ENCODE measurements at regions of chr12 and their contacts with region 1.

Region 1: DNA sequence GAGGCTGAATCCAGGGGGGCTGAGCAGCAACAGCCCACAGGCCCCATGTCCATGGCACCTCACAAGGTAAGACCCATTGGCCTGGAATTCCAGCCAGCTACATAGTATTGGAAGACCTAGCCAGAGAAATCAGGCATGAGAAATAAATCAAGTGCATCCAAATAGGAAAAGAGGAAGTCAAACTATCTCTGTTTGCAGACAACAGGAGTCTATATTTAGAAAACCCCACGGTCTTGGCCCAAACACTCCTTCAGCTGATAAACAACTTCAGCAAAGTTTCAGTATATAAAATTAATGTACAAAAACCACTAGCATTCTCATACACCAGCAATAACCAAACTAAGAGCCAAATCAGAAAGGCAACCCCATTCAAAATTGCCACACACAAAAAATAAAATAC is 16.9 kb downstream of the PDE6H start:
- DNase-seq: no peak
- ATAC-seq: no peak

Region 2: GRCh38 chr12:14257734-14258574 is 731.8 kb before region 1 on chr12:
- intact Hi-C with region 1: no loop called
- DNase-seq: no peak
- ATAC-seq: no peak

Region 3: DNA sequence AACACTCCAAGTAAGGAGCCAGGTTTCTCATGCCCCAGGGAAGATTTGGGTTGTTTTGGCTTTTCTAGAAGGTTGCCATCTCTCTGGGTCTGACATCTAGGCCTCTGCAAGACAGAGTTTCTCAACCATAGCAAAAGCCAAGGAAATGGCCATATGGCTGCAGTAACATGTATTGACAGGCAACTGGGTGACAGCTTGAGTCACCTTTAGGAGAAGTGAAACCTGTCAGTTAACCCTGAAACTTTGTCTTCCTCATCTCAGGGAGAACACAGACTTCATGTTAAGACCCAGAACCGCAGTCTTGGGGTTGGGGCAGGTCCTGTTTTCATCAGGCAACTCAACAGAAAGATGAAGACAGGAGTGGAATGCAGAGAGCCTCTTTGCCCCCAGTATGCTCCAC is 376.1 kb before region 1 on chr12:
- intact Hi-C with region 1: no loop called
- DNase-seq: no peak
- ATAC-seq: peak; percentile 9

Region 4: GRCh38 chr12:14849661-14850060 is 140.1 kb before region 1 on chr12:
- intact Hi-C with region 1: loop called (anchors 2 kb)
- DNase-seq: no peak
- ATAC-seq: peak; percentile 71

Region 5: GRCh38 chr12:14913381-14913781 is 76.4 kb before region 1 on chr12:
- intact Hi-C with region 1: no loop called
- DNase-seq: peak; percentile 75
- ATAC-seq: peak; percentile 86